ENCODE measurements at regions of chr17 and their contacts with region 1.

Region 1: DNA sequence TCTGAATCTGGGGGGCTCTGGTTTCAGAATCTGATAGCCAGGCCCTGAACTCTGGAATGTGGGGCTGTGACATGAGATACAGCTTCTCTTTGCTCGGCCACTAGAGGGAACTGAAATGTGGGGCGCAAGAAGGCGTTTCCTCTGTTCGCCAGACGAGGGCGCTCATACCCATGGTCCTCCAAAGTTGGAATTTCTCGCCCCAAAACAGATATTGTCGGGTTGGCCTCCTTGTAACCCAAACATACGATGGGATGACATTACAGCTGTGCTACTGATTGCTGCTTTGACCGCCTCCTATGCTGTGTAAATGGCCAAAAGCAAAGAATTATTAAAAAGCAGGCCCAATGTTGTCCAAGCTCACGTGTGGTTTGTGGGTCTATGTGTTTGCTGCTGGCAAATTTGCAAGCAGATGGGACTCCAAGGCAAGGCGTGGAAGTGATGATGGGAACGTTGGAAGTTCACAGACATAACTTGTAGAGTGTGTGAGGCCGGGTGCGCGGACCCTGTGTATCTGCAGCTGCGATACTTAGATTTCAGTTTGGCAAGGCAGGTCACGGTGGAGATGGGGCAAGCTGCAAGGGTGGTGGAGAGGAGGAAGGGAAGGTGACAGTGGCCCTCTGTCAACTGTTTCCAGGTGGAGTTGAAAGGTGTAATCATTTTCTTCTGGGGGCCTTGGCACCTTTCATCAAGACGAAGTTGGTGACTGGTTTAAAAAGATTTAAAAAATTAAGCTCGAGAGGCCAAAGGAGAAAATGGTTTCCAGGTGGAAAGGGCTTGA is 13.0 kb upstream of the MSI2 start:
- DNase-seq: peak; percentile 74
- H3K4me3 ChIP-seq: peak overlapping the region in 1 of 2 experiments; percentile 40; a peak in 1 of 4 replicates
- H3K27ac ChIP-seq: no peak overlapping the region; a peak in 1 of 4 replicates
- H3K4me1 ChIP-seq: peaks cover 0 to 9% of the 10 kb centered on the region in 2 experiments; a peak in 1 of 4 replicates
- H3K27me3 ChIP-seq: no peaks in the 10 kb centered on the region
- CTCF ChIP-seq: peak; percentile 100
- EP300 ChIP-seq: no peak; a peak in 1 of 4 replicates
- RAD21 ChIP-seq: peak; percentile 89

Region 2: GRCh38 chr17:57130761-57131461 is 112.4 kb before region 1 on chr17:
- CTCF ChIA-PET with region 1: interaction called, 11 read pairs
- POLR2A ChIA-PET with region 1: no interaction called
- DNase-seq: peak; percentile 98
- H3K4me3 ChIP-seq: peak overlapping the region; percentile 28 to 46; a peak in 2 of 4 replicates
- H3K27ac ChIP-seq: peak overlapping the region in 1 of 2 experiments; percentile 50; a peak in 1 of 4 replicates
- H3K4me1 ChIP-seq: peaks cover 0 to 12% of the 10 kb centered on the region in 2 experiments; a peak in 1 of 4 replicates
- H3K27me3 ChIP-seq: no peaks in the 10 kb centered on the region
- CTCF ChIP-seq: peak; percentile 90
- EP300 ChIP-seq: 0 out of 4 replicates have a peak, but pooled peaks of 1 of the 2 experiments have one; percentile 28
- RAD21 ChIP-seq: peak; percentile 92

Region 3: DNA sequence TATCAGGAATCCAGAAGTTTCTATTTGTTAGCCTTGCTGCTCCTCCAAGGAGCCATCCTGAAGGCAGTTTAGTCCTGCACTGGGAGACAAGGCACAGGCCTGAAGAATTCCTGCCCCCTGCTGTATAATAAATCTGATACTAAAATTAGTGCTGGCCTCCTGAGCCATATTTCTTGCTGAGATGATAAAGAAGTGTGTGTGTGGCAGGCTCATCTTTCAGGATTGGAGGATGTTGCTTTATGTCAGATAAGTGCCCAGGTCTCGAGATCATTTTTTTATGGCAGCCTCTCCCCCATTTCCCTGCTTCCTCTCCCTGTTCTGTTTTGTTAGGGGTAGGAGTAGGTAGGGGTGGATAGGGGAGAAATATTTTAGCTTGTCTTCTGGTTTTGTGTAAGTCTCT is 38.9 kb after region 1 on chr17:
- CTCF ChIA-PET with region 1: interaction called, 11 read pairs
- POLR2A ChIA-PET with region 1: no interaction called
- DNase-seq: peak; percentile 63
- H3K4me3 ChIP-seq: no peak overlapping the region
- H3K27ac ChIP-seq: peak overlapping the region in 1 of 2 experiments; percentile 71; a peak in 2 of 4 replicates
- H3K4me1 ChIP-seq: peaks cover 11 to 61% of the 10 kb centered on the region in 2 experiments; a peak in 3 of 4 replicates
- H3K27me3 ChIP-seq: no peaks in the 10 kb centered on the region
- CTCF ChIP-seq: peak; percentile 16; the same call in 1 of the 2 replicates
- EP300 ChIP-seq: no peak
- RAD21 ChIP-seq: peak; percentile 42; the same call in 1 of the 2 replicates

Region 4: GRCh38 chr17:57422574-57423164 is 179.3 kb after region 1 on chr17:
- CTCF ChIA-PET with region 1: interaction called, 11 read pairs
- POLR2A ChIA-PET with region 1: interaction called, 3 read pairs
- DNase-seq: no peak
- H3K4me3 ChIP-seq: no peak overlapping the region
- H3K27ac ChIP-seq: peak overlapping the region; percentile 11 to 84
- H3K4me1 ChIP-seq: peaks cover 37 to 74% of the 10 kb centered on the region in 2 experiments
- H3K27me3 ChIP-seq: no peaks in the 10 kb centered on the region
- CTCF ChIP-seq: no peak
- EP300 ChIP-seq: no peak
- RAD21 ChIP-seq: no peak

Region 5: DNA sequence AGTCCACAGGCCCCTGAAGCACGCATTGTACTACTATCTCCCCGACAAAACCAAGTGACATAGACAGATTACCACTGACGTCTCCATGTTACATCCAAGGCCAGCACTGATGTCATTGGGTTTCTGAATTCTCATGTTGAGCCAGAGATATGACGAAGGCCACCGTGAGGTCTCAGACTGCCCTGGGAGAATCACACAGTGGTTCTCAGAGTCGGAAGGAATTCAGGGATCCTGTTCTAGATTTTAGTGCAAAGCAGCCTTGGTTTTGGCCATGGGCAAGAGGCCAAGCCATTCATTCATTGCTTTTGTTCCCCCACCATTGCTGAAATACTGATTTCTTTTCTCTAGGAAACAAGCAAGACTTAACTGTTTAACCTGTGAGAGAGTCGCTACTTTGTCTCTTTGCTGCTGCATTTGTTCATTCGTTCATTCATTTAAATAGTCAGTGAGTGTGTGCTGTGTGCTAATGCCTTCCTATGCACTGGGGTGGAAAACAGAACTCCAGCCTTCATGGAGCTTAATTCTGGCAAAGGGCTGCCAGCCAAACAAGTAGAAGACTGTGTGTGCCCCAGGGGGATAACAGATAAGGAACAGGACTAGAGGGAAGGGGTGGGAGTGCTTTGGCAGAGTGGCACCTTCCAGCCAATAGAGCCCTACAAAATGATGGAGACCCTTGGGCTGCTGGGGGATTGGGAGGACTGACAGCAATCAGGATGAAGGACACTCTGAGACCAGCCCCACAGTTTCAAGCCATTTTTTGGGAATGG is 235.3 kb after region 1 on chr17:
- CTCF ChIA-PET with region 1: interaction called, 12 read pairs
- POLR2A ChIA-PET with region 1: no interaction called
- DNase-seq: no peak
- H3K4me3 ChIP-seq: no peak overlapping the region
- H3K27ac ChIP-seq: peak overlapping the region in 1 of 2 experiments; percentile 17; a peak in 1 of 4 replicates
- H3K4me1 ChIP-seq: peaks cover 49 to 70% of the 10 kb centered on the region in 2 experiments
- H3K27me3 ChIP-seq: no peaks in the 10 kb centered on the region
- CTCF ChIP-seq: no peak
- EP300 ChIP-seq: no peak
- RAD21 ChIP-seq: no peak

Region 6: GRCh38 chr17:57541472-57542394 is 298.4 kb after region 1 on chr17:
- CTCF ChIA-PET with region 1: interaction called, 14 read pairs
- POLR2A ChIA-PET with region 1: no interaction called
- DNase-seq: peak; percentile 76
- H3K4me3 ChIP-seq: peak overlapping the region in 1 of 2 experiments; percentile 10; a peak in 1 of 4 replicates
- H3K27ac ChIP-seq: peak overlapping the region; percentile 65 to 100
- H3K4me1 ChIP-seq: peaks cover 52 to 98% of the 10 kb centered on the region in 2 experiments
- H3K27me3 ChIP-seq: no peaks in the 10 kb centered on the region
- CTCF ChIP-seq: no peak
- EP300 ChIP-seq: peak; percentile 71 to 97; a peak in 3 of 4 replicates
- RAD21 ChIP-seq: peak; percentile 54

Region 7: DNA sequence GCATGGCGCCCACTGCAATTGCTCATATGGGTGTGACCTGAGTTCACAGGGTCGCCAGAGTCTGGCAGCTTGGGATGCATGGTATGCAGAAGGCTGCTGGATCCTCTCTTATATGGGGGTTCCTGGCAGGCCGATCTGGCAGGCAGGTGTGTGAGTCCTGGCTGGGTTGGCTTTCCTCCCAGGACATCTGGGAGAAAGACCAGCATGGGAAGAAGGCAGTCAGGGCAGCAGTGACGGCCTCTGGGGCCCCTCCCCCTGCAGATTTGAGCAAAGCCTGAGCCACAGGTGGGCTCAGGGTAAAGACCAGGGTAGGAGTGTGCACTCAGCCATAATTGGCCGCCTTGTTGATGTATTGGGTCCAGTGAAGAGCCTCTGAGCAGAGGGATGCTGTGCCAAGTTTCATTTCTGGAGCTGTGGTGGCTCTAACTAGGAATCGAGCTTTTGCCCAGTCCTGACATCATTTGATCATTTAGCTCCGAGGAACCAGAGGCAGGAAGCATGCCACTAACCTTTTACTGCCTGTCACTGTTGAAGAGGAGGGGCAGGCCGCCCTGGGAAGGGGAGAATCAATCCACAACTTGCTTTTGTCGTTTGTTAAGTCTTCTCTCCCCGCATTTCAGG is 327.5 kb after region 1 on chr17:
- CTCF ChIA-PET with region 1: interaction called, 13 read pairs
- POLR2A ChIA-PET with region 1: no interaction called
- DNase-seq: no peak
- H3K4me3 ChIP-seq: no peak overlapping the region
- H3K27ac ChIP-seq: peak overlapping the region in 1 of 2 experiments; percentile 100; a peak in 2 of 4 replicates
- H3K4me1 ChIP-seq: peaks cover 0 to 87% of the 10 kb centered on the region in 2 experiments; a peak in 2 of 4 replicates
- H3K27me3 ChIP-seq: no peaks in the 10 kb centered on the region
- CTCF ChIP-seq: no peak
- EP300 ChIP-seq: peak in 1 of 2 experiments; percentile 41; a peak in 1 of 4 replicates
- RAD21 ChIP-seq: peak; percentile 5; the same call in 1 of the 2 replicates